ENCODE measurements at regions of chr2 and their contacts with region 1.

Region 1: DNA sequence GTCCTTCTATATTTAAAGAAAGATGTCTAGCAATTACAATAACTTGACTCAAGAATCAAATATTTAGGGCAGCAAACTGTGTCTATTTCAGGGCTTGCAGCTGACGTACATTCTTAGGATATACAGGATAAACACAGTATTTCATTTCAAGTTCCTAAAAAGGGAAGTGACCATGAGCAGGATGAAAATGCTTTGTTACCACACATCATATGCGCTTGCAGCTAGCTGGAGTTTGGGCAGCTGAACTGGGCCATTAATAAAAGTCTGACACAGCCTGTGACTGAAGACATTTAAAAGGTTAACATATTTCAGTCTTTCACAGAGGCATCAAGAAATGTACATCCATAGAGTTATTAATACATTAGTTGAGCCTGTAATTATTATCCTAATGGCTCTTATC is 264.5 kb upstream of the TRIB2 start:
- DNase-seq: peak in 1 of 4 experiments; percentile 45
- ATAC-seq: peak; percentile 26
- H3K4me3 ChIP-seq: no peak overlapping the region
- H3K27ac ChIP-seq: peak overlapping the region; percentile 64; the same call in 2 of the 3 replicates
- H3K4me1 ChIP-seq: peaks cover 15 to 52% of the 10 kb centered on the region in 2 experiments; a peak in 4 of 5 replicates
- H3K27me3 ChIP-seq: no peaks in the 10 kb centered on the region
- CTCF ChIP-seq: no peak
- EP300 ChIP-seq: no peak
- POLR2A ChIP-seq: no peak
- RAD21 ChIP-seq: no peak

Region 2: GRCh38 chr2:12277241-12278034 is 174.8 kb before region 1 on chr2:
- CTCF ChIA-PET with region 1: no interaction called
- POLR2A ChIA-PET with region 1: no interaction called
- in situ Hi-C with region 1: no loop called
- intact Hi-C with region 1: loop called (anchors 5 kb)
- DNase-seq: peak; percentile 81 to 96 (median 87)
- ATAC-seq: peak; percentile 78
- H3K4me3 ChIP-seq: peak overlapping the region; percentile 39
- H3K27ac ChIP-seq: peak overlapping the region; percentile 90
- H3K4me1 ChIP-seq: peaks cover 0 to 6% of the 10 kb centered on the region in 2 experiments; a peak in 2 of 5 replicates
- H3K27me3 ChIP-seq: no peaks in the 10 kb centered on the region
- CTCF ChIP-seq: no peak
- EP300 ChIP-seq: peak; percentile 95
- POLR2A ChIP-seq: peak; percentile 85
- RAD21 ChIP-seq: peak in 1 of 2 experiments; percentile 29; a peak in 2 of 4 replicates

Region 3: GRCh38 chr2:12340164-12340563 is 112.0 kb before region 1 on chr2:
- CTCF ChIA-PET with region 1: no interaction called
- POLR2A ChIA-PET with region 1: no interaction called
- in situ Hi-C with region 1: no loop called
- intact Hi-C with region 1: no loop called
- DNase-seq: no peak
- ATAC-seq: no peak
- H3K4me3 ChIP-seq: no peak overlapping the region
- H3K27ac ChIP-seq: no peak overlapping the region
- H3K4me1 ChIP-seq: no peaks in the 10 kb centered on the region; a peak in 1 of 5 replicates
- H3K27me3 ChIP-seq: no peaks in the 10 kb centered on the region
- CTCF ChIP-seq: no peak
- EP300 ChIP-seq: no peak
- POLR2A ChIP-seq: no peak
- RAD21 ChIP-seq: no peak

Region 4: GRCh38 chr2:12501469-12502158 is 49.4 kb after region 1 on chr2:
- CTCF ChIA-PET with region 1: no interaction called
- POLR2A ChIA-PET with region 1: no interaction called
- in situ Hi-C with region 1: no loop called
- intact Hi-C with region 1: no loop called
- DNase-seq: no peak
- ATAC-seq: peak; percentile 36; the same call in 1 of the 3 replicates
- H3K4me3 ChIP-seq: no peak overlapping the region
- H3K27ac ChIP-seq: no peak overlapping the region
- H3K4me1 ChIP-seq: peaks cover 0 to 3% of the 10 kb centered on the region in 2 experiments; a peak in 2 of 5 replicates
- H3K27me3 ChIP-seq: no peaks in the 10 kb centered on the region
- CTCF ChIP-seq: no peak
- EP300 ChIP-seq: no peak
- POLR2A ChIP-seq: no peak
- RAD21 ChIP-seq: no peak

Region 5: DNA sequence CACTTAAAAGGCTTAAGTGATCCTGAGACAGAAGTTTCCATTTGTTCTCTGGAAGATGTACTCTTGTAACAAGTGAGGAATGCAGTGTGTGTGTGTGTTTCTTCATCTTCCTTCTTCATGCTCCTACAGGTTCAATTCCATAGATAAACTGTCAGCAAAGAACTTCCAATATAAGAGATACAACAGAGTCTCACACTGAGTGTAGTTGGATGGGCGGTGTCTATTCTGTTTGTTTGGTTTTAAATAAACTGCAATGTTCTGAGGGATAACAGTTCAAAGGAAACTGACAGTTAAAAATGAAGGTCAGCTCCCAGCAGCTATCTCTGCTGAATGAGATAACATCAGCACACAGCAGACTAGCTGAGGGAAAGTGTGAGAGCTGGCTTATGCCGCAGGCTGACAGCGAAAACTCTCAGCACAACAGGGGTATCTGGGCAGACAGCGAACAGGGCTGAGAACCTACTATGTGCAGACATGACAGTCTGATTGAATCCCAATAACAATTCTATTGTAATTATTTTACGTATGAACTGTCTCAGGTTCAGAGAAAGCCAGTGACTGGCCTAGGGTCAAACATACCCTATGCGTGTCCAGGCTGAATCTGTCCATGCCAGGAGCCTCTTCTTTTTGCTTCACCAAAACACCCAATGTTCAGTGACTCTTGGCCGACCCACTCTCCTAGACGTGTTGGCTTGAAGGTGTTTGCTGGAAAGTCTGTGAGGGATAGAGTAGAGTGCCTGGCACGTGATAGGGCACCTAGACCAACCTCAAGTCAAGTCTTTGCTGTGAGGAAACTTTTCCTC is 62.6 kb after region 1 on chr2:
- CTCF ChIA-PET with region 1: no interaction called
- POLR2A ChIA-PET with region 1: no interaction called
- in situ Hi-C with region 1: no loop called
- intact Hi-C with region 1: loop called (anchors 2 kb)
- DNase-seq: peak in 2 of 4 experiments; percentile 62 to 63
- ATAC-seq: peak; percentile 94
- H3K4me3 ChIP-seq: no peak overlapping the region
- H3K27ac ChIP-seq: peak overlapping the region; percentile 4; the same call in 2 of the 3 replicates
- H3K4me1 ChIP-seq: peaks cover 0 to 15% of the 10 kb centered on the region in 2 experiments; a peak in 4 of 5 replicates
- H3K27me3 ChIP-seq: no peaks in the 10 kb centered on the region
- CTCF ChIP-seq: no peak; a peak in 1 of 6 replicates
- EP300 ChIP-seq: peak; percentile 74
- POLR2A ChIP-seq: no peak
- RAD21 ChIP-seq: no peak